Naive thymus-derived CD4-positive, alpha-beta T cell (primary cell): ENCODE measurements at regions of chr17 and their contacts with region 1.

Region 1: DNA sequence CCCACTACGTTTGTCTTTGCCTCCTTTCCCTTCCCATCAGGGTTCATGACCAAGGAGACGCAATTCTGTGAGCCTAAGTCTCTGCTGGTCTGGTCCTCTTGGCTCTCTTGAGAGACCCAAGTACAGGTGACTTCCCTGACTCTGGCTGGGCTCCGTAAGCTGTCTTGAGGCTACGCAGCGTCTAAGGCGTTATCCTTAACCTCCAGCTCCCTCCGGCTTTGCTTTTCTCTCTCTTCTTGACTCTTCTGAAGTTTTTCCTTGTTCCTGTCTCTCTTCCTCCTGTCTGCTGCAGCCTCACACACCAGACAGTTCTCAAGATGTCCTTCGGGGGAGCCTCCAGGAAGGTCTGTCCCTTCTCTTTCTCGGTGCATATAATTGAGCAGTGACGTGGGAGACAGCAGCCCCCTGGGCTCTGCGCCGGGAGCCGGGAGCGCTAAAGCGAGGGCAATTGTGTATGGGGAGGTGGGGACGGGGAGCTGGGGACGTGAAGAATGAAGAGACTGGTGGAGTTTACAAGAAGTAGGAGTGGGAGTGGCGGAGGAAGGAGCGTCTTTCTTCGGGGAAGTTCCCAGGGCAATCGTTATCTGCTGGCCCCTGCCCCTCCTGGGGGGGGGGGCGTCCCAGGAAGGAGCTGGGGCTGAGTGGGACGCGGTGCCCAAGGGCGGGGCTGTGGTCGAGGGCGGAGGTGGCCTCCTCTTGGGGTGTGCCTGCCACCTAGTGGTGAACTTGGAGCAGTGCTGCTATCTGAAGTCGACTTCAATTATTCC is 6.9 kb upstream of the PIRT start:
- DNase-seq: peak; percentile 43 to 76 (median 70)
- ATAC-seq: peak; percentile 96
- H3K4me3 ChIP-seq: peak overlapping the region; percentile 52
- H3K4me3 Mint-ChIP-seq: peak overlapping the region; percentile 70 to 89 (median 86)
- H3K27ac ChIP-seq: no peak overlapping the region
- H3K27ac Mint-ChIP-seq: peak overlapping the region in 3 of 9 donors; percentile 26 to 46 (median 43)
- H3K4me1 ChIP-seq: peaks cover 0 to 6% of the 10 kb centered on the region in 2 donors
- H3K4me1 Mint-ChIP-seq: peaks cover 0 to 10% (median 10%) of the 10 kb centered on the region in 7 donors
- H3K27me3 ChIP-seq: no peaks in the 10 kb centered on the region
- H3K27me3 Mint-ChIP-seq: peaks cover 0 to 11% (median 0%) of the 10 kb centered on the region in 5 donors

Region 2: GRCh38 chr17:10631048-10631700 is 213.6 kb before region 1 on chr17:
- CTCF ChIA-PET with region 1: interaction called, 7 read pairs
- POLR2A ChIA-PET with region 1: no interaction called
- intact Hi-C with region 1: loop called in 1 of 2 experiments (anchors 1 kb)
- DNase-seq: peak in 3 of 9 donors; percentile 23 to 40 (median 31)
- ATAC-seq: no peak
- H3K4me3 ChIP-seq: no peak overlapping the region
- H3K4me3 Mint-ChIP-seq: no peak overlapping the region
- H3K27ac ChIP-seq: no peak overlapping the region
- H3K27ac Mint-ChIP-seq: no peak overlapping the region
- H3K4me1 ChIP-seq: no peaks in the 10 kb centered on the region
- H3K4me1 Mint-ChIP-seq: peaks cover 0 to 4% (median 0%) of the 10 kb centered on the region in 7 donors
- H3K27me3 ChIP-seq: no peaks in the 10 kb centered on the region
- H3K27me3 Mint-ChIP-seq: no peaks in the 10 kb centered on the region

Region 3: DNA sequence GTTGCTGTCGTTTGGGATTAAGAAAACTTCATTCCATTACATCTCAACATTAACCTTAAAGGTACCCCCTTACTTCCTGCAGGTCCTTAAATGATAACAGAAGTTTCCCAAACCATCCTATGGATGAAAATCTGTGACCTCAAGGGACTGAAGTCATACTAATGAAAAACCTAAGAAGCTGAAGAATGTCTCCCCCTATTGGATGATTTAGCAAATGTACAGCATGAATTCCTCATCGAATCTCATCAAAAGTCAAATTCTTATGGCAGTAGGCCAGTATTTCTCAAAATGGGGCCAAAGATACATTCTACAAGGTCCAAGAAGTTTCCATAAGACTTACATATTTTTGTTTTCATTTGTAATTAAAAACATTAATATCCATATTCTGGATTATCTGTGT is 161.0 kb before region 1 on chr17:
- CTCF ChIA-PET with region 1: interaction called, 8 read pairs
- POLR2A ChIA-PET with region 1: no interaction called
- intact Hi-C with region 1: loop called in 1 of 2 experiments (anchors 1 kb)
- DNase-seq: no peak
- ATAC-seq: no peak
- H3K4me3 ChIP-seq: no peak overlapping the region
- H3K4me3 Mint-ChIP-seq: no peak overlapping the region
- H3K27ac ChIP-seq: no peak overlapping the region
- H3K27ac Mint-ChIP-seq: peak overlapping the region in 1 of 9 donors; percentile 18
- H3K4me1 ChIP-seq: no peaks in the 10 kb centered on the region
- H3K4me1 Mint-ChIP-seq: peaks cover 3 to 13% (median 11%) of the 10 kb centered on the region in 7 donors
- H3K27me3 ChIP-seq: no peaks in the 10 kb centered on the region
- H3K27me3 Mint-ChIP-seq: no peaks in the 10 kb centered on the region

Region 4: GRCh38 chr17:10737168-10737622 is 107.6 kb before region 1 on chr17:
- CTCF ChIA-PET with region 1: interaction called, 35 read pairs
- POLR2A ChIA-PET with region 1: interaction called, 3 read pairs
- intact Hi-C with region 1: loop called (anchors 1 kb)
- DNase-seq: peak in 6 of 9 donors; percentile 21 to 58 (median 46)
- ATAC-seq: peak; percentile 71
- H3K4me3 ChIP-seq: no peak overlapping the region
- H3K4me3 Mint-ChIP-seq: peak overlapping the region in 8 of 10 donors; percentile 5 to 57 (median 39)
- H3K27ac ChIP-seq: no peak overlapping the region
- H3K27ac Mint-ChIP-seq: peak overlapping the region in 7 of 9 donors; percentile 34 to 85 (median 66)
- H3K4me1 ChIP-seq: peaks cover 0 to 9% of the 10 kb centered on the region in 2 donors
- H3K4me1 Mint-ChIP-seq: peaks cover 2 to 28% (median 13%) of the 10 kb centered on the region in 7 donors
- H3K27me3 ChIP-seq: no peaks in the 10 kb centered on the region
- H3K27me3 Mint-ChIP-seq: peaks cover 0 to 10% (median 0%) of the 10 kb centered on the region in 5 donors

Region 5: DNA sequence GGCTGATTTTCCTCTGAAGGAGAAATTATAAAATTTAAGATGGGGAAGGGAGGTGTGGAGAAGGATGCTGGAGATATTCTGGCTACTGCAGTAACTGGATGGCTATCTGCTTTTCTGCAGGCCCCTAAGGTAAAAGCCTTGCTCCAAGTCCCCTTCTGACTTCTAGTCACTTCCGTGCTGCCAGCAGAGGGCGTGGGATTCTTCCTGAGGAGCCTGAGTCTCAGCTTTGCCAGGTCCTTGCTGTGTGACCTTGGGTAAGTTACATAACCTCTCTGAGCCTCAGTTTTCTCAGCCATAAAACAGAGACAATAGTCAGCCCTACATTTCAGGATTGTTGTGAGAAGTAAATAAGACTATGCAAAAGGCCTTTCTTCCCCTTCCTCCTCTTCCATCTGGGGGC is 90.7 kb before region 1 on chr17:
- CTCF ChIA-PET with region 1: no interaction called
- POLR2A ChIA-PET with region 1: no interaction called
- intact Hi-C with region 1: loop called in 1 of 2 experiments (anchors 5 kb)
- DNase-seq: no peak
- ATAC-seq: no peak
- H3K4me3 ChIP-seq: no peak overlapping the region
- H3K4me3 Mint-ChIP-seq: no peak overlapping the region
- H3K27ac ChIP-seq: no peak overlapping the region
- H3K27ac Mint-ChIP-seq: peak overlapping the region in 1 of 9 donors; percentile 82
- H3K4me1 ChIP-seq: no peaks in the 10 kb centered on the region
- H3K4me1 Mint-ChIP-seq: peaks cover 0 to 6% (median 0%) of the 10 kb centered on the region in 7 donors
- H3K27me3 ChIP-seq: no peaks in the 10 kb centered on the region
- H3K27me3 Mint-ChIP-seq: no peaks in the 10 kb centered on the region

Region 6: GRCh38 chr17:10920558-10921108 is 75.8 kb after region 1 on chr17:
- CTCF ChIA-PET with region 1: no interaction called
- POLR2A ChIA-PET with region 1: no interaction called
- intact Hi-C with region 1: no loop called
- DNase-seq: no peak
- ATAC-seq: no peak
- H3K4me3 ChIP-seq: no peak overlapping the region
- H3K4me3 Mint-ChIP-seq: no peak overlapping the region
- H3K27ac ChIP-seq: no peak overlapping the region
- H3K27ac Mint-ChIP-seq: no peak overlapping the region
- H3K4me1 ChIP-seq: no peaks in the 10 kb centered on the region
- H3K4me1 Mint-ChIP-seq: no peaks in the 10 kb centered on the region
- H3K27me3 ChIP-seq: no peaks in the 10 kb centered on the region
- H3K27me3 Mint-ChIP-seq: peaks cover 0 to 38% (median 14%) of the 10 kb centered on the region in 5 donors